Aorta (tissue), 5 donors: ENCODE measurements at regions of chr18 and their contacts with region 1.

Region 1: DNA sequence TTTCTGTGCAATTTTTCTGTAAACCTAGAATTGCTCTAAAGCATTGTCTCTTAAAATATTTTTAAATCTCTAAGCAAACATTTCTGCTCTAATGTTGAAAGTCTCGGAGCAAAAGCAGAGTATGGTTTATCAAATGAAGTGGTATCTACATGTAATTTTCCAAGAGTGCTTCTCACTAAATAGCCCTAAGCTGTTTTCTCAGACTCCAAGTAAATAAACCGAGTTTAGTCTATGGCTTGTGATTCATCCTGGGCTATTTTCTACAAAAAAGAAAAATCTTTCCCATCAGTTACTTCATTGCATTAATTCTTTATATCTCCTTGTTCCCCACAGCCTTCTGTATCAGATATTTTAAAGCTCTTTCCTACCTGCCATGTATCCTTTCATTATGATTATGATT is 90.7 kb downstream of the METTL4 start:
- DNase-seq: no peak
- ATAC-seq: no peak
- H3K4me3 ChIP-seq: no peak overlapping the region
- H3K27ac ChIP-seq: no peak overlapping the region
- H3K4me1 ChIP-seq: no peaks in the 10 kb centered on the region
- H3K27me3 ChIP-seq: no peaks in the 10 kb centered on the region

Region 2: GRCh38 chr18:2494921-2495320 is 14.3 kb after region 1 on chr18:
- intact Hi-C with region 1: loop called in 1 of 2 experiments (anchors 1 kb)
- DNase-seq: no peak
- ATAC-seq: no peak
- H3K4me3 ChIP-seq: no peak overlapping the region
- H3K27ac ChIP-seq: no peak overlapping the region
- H3K4me1 ChIP-seq: no peaks in the 10 kb centered on the region
- H3K27me3 ChIP-seq: no peaks in the 10 kb centered on the region